Posterior vena cava (tissue), 2 donors: ENCODE measurements at regions of chr5 and their contacts with region 1.

Region 1: DNA sequence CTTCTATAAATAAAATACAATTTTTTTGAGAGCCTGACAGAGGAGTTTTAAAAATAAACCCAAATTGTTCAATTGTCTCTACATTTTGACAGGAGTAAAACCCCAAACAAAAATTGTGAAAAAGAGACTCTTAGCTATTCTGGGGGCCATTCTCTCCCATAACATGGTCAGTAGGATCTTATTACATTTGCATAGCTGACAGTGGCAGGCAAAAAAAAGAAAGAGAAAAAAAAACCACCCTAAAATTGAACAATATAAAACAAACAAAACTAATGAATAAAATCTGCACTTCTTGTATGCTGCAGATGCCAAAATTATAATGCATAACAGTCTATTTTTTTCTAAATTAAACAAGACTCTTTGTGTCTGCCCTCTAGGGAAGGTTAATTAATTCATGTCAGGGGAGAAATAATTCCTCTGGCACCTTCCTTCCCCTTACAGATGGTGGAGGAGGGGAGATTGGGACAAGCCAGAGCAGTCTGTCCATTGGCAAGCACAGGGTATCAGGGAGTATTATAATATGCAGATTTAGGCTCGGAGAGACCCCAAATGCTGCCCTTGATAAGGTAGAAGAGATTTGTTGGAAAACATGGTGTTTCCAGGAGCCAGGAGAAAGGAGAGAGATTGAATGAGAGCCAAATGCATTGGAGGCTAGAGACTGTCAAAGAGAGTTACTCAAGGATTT is 79.7 kb upstream of the CDH6 start:
- DNase-seq: no peak

Region 2: GRCh38 chr5:31165729-31166128 is 51.9 kb after region 1 on chr5:
- intact Hi-C with region 1: loop called in 1 of 2 experiments (anchors 2 kb)
- DNase-seq: no peak